ENCODE measurements at regions of chr14 and their contacts with region 1.

Region 1: DNA sequence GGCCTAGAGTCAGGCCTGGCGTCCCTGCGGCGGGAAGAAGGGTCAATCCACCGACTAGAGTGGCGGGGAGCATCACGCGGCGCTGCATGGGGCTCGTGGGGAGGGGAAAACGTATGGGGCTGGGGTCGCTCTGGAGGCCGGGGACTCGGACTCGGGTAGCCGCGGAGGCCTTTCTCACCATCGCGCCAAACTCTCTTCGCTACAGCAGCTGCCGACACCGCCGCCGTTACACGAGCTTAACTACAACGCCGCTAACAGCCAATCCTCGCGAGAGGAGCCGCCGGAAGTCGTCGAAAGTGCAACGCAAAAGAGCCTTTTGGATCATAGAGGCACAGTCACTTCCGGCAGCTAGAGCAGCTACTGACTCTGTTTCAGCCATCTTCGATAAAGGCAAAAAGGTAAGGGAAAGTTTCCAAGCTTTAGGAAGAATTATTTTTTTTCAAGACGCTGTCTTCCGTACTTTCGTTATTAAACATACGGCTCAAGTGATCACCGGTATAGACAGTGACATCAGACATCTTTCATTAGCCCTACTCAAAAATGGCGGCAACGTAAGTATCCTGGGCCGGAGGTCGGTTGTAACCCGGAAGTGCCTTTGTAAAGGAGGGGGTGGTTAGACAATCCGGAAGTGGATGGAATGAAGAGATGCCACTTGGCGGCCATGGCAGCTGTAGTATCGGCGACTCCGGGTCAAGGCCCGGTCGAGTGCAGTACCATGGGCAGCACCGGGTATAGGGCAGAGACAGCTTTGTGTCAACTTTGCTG is at the starts of genes ERH and SLC39A9:
- DNase-seq: peak; percentile 97
- H3K4me3 Mint-ChIP-seq: peak within 1 kb of the TSS; percentile 89
- H3K27ac Mint-ChIP-seq: peak within 1 kb of the TSS; percentile 98
- H3K4me1 Mint-ChIP-seq: peaks cover 66% of the 10 kb centered on the region
- H3K27me3 Mint-ChIP-seq: no peaks in the 10 kb centered on the region
- total RNA-seq, gene ERH: 278 to 334 TPM
- total RNA-seq, gene SLC39A9: 43.7 to 50.4 TPM

Region 2: DNA sequence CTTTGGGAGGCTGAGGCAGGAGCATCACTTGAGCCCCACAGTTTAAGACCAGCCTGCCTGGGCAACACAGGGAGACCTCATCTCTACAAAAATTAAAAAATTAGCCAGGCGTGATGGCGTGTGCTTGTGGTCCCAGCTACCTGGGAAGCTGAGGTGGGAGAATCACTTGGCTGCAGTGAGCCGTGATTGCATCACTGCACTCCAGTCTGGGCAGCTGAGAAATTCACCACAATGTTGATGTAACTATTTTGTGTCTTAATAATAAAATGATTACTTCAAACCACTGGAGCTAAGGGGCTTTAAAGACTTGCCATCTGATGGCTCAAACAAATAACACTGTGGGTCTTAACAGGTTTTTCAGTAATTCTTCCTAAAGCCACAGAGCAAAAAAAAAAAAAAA is 10.9 kb before region 1 on chr14:
- CTCF ChIA-PET with region 1: interaction called, 12 read pairs
- POLR2A ChIA-PET with region 1: no interaction called
- DNase-seq: no peak
- H3K4me3 Mint-ChIP-seq: no peak overlapping the region
- H3K27ac Mint-ChIP-seq: no peak overlapping the region
- H3K4me1 Mint-ChIP-seq: peaks cover 35% of the 10 kb centered on the region
- H3K27me3 Mint-ChIP-seq: no peaks in the 10 kb centered on the region

Measured in activated CD4-positive, alpha-beta T cell treated with anti-CD3 and anti-CD28 coated beads, Interleukin-2, amount 10 ng/mL, durations not matched to agents 7 days and 5 days (primary cell).